Caco-2 (cell line): ENCODE measurements at regions of chr7 and their contacts with region 1.

Region 1: GRCh38 chr7:81159387-81159786 is 240.5 kb upstream of the SEMA3C start:
- DNase-seq: no peak
- H3K4me3 ChIP-seq: no peak overlapping the region
- H3K4me3 Mint-ChIP-seq: no peak overlapping the region
- H3K27ac Mint-ChIP-seq: no peak overlapping the region
- H3K4me1 ChIP-seq: peaks cover 42% of the 10 kb centered on the region
- H3K4me1 Mint-ChIP-seq: peaks cover 50% of the 10 kb centered on the region
- H3K27me3 ChIP-seq: no peaks in the 10 kb centered on the region
- H3K27me3 Mint-ChIP-seq: no peaks in the 10 kb centered on the region
- CTCF ChIP-seq: no peak

Region 2: GRCh38 chr7:80722616-80723141 is 436.7 kb before region 1 on chr7:
- CTCF ChIA-PET with region 1: no interaction called
- POLR2A ChIA-PET with region 1: no interaction called
- intact Hi-C with region 1: loop called (anchors 5 kb)
- DNase-seq: peak; percentile 63 to 84
- H3K4me3 ChIP-seq: no peak overlapping the region
- H3K4me3 Mint-ChIP-seq: peak overlapping the region; percentile 18
- H3K27ac Mint-ChIP-seq: peak overlapping the region; percentile 70
- H3K4me1 ChIP-seq: peaks cover 57% of the 10 kb centered on the region
- H3K4me1 Mint-ChIP-seq: peaks cover 49% of the 10 kb centered on the region
- H3K27me3 ChIP-seq: no peaks in the 10 kb centered on the region
- H3K27me3 Mint-ChIP-seq: no peaks in the 10 kb centered on the region
- CTCF ChIP-seq: no peak

Region 3: DNA sequence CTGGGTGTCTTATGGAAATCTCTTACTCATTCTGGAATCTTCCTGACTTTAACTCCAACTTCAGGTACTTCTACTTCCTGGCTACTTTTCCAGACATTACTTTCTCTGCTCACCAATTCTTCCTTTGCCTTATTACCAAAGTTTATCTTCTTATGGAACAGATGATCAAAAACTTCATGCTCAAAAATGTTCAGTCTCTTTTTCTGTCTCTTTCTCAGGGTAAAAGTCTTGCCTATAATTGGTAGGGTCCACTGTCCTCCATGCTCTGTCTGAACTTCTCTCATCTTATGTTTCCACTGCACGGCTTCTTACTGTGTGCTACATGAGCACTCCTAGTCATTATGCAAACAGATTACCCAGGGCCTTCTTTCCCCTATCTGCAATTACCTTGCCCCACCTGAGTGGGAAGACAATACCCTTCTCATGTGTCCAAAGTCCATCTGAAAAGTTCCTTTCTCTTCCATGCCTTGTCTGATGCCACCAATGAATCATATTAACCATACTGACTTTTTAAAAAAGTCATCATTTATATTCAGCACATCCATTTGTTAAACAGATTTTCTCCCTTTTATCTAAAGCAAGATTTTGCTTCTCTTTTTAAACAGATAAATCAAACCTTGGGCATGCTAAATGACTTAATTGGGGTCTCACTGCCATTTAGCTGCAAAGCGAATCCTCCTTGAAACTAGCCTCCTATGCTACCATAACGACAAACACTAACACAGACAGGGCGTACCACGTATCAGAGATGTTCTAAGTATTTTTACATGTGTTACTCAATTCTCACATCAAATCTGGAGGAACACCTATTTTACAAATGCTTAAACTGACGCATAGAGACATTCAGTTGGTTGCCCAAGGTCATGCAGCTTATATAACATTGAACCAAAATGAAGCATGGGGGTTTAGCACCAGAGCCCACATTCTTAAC is 289.3 kb before region 1 on chr7:
- CTCF ChIA-PET with region 1: no interaction called
- POLR2A ChIA-PET with region 1: no interaction called
- intact Hi-C with region 1: loop called (anchors 5 kb)
- DNase-seq: peak; percentile 32 to 55
- H3K4me3 ChIP-seq: no peak overlapping the region
- H3K4me3 Mint-ChIP-seq: peak overlapping the region; percentile 41
- H3K27ac Mint-ChIP-seq: peak overlapping the region; percentile 49
- H3K4me1 ChIP-seq: peaks cover 32% of the 10 kb centered on the region
- H3K4me1 Mint-ChIP-seq: peaks cover 27% of the 10 kb centered on the region
- H3K27me3 ChIP-seq: no peaks in the 10 kb centered on the region
- H3K27me3 Mint-ChIP-seq: no peaks in the 10 kb centered on the region
- CTCF ChIP-seq: no peak

Region 4: GRCh38 chr7:81140775-81141174 is 18.6 kb before region 1 on chr7:
- CTCF ChIA-PET with region 1: no interaction called
- POLR2A ChIA-PET with region 1: no interaction called
- intact Hi-C with region 1: no loop called
- DNase-seq: no peak
- H3K4me3 ChIP-seq: no peak overlapping the region
- H3K4me3 Mint-ChIP-seq: no peak overlapping the region
- H3K27ac Mint-ChIP-seq: no peak overlapping the region
- H3K4me1 ChIP-seq: no peaks in the 10 kb centered on the region; the same call in 1 of the 2 replicates
- H3K4me1 Mint-ChIP-seq: peaks cover 22% of the 10 kb centered on the region
- H3K27me3 ChIP-seq: no peaks in the 10 kb centered on the region
- H3K27me3 Mint-ChIP-seq: no peaks in the 10 kb centered on the region
- CTCF ChIP-seq: no peak

Region 5: GRCh38 chr7:81234896-81235295 is 75.5 kb after region 1 on chr7:
- CTCF ChIA-PET with region 1: no interaction called
- POLR2A ChIA-PET with region 1: no interaction called
- intact Hi-C with region 1: loop called (anchors 5 kb)
- DNase-seq: no peak
- H3K4me3 ChIP-seq: no peak overlapping the region
- H3K4me3 Mint-ChIP-seq: no peak overlapping the region
- H3K27ac Mint-ChIP-seq: no peak overlapping the region
- H3K4me1 ChIP-seq: no peaks in the 10 kb centered on the region
- H3K4me1 Mint-ChIP-seq: no peaks in the 10 kb centered on the region
- H3K27me3 ChIP-seq: no peaks in the 10 kb centered on the region
- H3K27me3 Mint-ChIP-seq: no peaks in the 10 kb centered on the region
- CTCF ChIP-seq: no peak

Region 6: DNA sequence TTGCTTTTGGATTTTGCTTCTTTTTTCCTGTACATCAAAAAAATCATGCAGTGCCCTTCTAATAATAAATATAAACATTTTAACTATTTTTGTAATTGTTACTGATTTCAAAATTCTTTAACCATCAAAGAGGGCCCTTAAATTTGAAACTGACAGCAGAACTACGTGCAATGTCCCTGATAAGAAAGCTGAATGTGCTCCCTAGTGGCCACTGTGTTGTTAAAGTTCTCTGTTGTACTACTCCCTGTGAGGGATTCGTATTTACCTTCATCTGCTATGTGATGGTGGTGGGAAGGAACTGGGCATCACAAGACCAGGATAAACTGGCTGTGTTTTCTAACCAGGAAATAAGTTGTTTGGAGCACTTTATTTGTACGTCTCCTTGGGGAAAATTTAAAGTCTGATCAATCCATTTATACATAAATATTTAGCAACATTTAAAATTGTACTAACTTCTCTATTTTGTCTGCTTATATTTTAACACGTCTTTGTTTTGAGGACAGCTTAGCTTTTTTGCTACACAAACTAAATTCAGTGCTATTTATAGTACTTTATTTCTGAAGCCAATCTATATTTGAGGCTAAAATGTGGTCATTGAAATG is 288.1 kb after region 1 on chr7:
- CTCF ChIA-PET with region 1: no interaction called
- POLR2A ChIA-PET with region 1: no interaction called
- intact Hi-C with region 1: loop called (anchors 2 kb)
- DNase-seq: peak; percentile 47 to 51
- H3K4me3 ChIP-seq: no peak overlapping the region
- H3K4me3 Mint-ChIP-seq: no peak overlapping the region
- H3K27ac Mint-ChIP-seq: no peak overlapping the region
- H3K4me1 ChIP-seq: no peaks in the 10 kb centered on the region
- H3K4me1 Mint-ChIP-seq: peaks cover 11% of the 10 kb centered on the region
- H3K27me3 ChIP-seq: no peaks in the 10 kb centered on the region
- H3K27me3 Mint-ChIP-seq: no peaks in the 10 kb centered on the region
- CTCF ChIP-seq: peak; percentile 62 to 72